Stomach (tissue), 19 donors: ENCODE measurements at regions of chr16 and their contacts with region 1.

Region 1: DNA sequence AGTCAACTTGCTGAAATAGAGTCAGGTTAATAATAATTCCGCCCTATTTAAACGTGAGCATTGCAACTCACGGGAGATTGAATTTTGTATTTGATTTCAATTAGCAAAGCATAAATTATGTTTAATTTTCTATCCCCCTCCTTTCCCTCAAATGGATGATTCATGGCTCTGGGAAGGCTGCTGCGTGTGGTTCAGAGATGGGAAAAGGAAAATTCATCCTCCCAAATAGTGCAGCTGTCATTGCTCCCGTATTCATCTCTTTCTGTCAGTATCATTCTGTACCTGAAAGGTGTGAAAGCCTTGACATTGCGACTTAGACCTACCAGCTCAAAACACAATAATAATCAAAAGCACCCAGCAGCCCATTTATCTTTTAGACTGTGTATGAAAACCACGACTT is 447.3 kb downstream of the HS3ST4 start:
- DNase-seq: no peak
- H3K4me3 ChIP-seq: no peak overlapping the region
- H3K27ac ChIP-seq: no peak overlapping the region
- H3K4me1 ChIP-seq: no peaks in the 10 kb centered on the region
- H3K27me3 ChIP-seq: no peaks in the 10 kb centered on the region
- CTCF ChIP-seq: no peak
- EP300 ChIP-seq: no peak
- POLR2A ChIP-seq: no peak

Region 2: GRCh38 chr16:25771812-25772568 is 367.1 kb before region 1 on chr16:
- intact Hi-C with region 1: no loop called
- DNase-seq: no peak
- H3K4me3 ChIP-seq: no peak overlapping the region
- H3K27ac ChIP-seq: no peak overlapping the region
- H3K4me1 ChIP-seq: no peaks in the 10 kb centered on the region
- H3K27me3 ChIP-seq: no peaks in the 10 kb centered on the region
- CTCF ChIP-seq: no peak
- EP300 ChIP-seq: no peak
- POLR2A ChIP-seq: no peak

Region 3: DNA sequence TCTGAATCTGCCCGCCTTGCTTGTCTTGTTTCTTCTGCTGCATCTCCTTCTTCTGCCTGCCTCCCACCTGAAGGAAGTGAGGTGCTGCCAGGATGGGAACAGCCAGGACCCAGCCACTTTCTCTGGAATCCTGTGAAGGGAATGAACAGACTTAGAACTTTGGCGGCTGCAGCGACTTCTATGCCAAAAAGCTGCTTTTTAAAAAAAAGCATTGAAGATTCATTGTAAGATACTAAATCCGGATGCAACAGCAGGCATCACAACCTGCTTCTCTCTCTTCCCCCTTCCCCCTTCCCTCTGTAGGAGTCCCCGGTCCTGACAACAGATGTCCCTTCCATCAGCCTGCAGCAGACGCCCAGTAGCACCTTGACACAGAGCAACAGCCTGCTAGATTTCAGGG is 271.0 kb before region 1 on chr16:
- intact Hi-C with region 1: no loop called
- DNase-seq: no peak
- H3K4me3 ChIP-seq: no peak overlapping the region
- H3K27ac ChIP-seq: no peak overlapping the region
- H3K4me1 ChIP-seq: no peaks in the 10 kb centered on the region
- H3K27me3 ChIP-seq: no peaks in the 10 kb centered on the region
- CTCF ChIP-seq: no peak
- EP300 ChIP-seq: no peak
- POLR2A ChIP-seq: no peak

Region 4: DNA sequence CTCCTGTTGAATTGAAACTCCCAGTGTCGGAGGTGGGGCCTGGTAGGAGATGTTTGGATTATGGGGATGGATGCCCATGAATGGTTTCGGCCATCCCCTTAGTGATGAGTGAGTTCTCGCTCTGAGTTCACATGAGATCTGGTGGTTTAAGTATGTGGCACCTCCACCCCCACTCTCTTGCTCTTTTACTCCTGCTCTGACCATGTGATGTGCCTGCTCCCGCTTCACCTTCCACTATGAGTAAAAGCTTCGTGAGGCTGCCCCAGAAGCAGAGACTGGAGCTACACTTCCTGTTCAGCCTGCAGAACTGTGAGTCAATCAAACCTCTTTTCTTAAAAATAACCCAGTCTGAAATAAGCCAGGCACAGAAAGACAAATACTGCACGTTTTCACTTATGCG is 65.0 kb after region 1 on chr16:
- intact Hi-C with region 1: loop called (anchors 5 kb)
- DNase-seq: no peak
- H3K4me3 ChIP-seq: no peak overlapping the region
- H3K27ac ChIP-seq: no peak overlapping the region
- H3K4me1 ChIP-seq: no peaks in the 10 kb centered on the region
- H3K27me3 ChIP-seq: no peaks in the 10 kb centered on the region
- CTCF ChIP-seq: no peak
- EP300 ChIP-seq: no peak
- POLR2A ChIP-seq: no peak